ENCODE measurements at regions of chr3 and their contacts with region 1.

Region 1: DNA sequence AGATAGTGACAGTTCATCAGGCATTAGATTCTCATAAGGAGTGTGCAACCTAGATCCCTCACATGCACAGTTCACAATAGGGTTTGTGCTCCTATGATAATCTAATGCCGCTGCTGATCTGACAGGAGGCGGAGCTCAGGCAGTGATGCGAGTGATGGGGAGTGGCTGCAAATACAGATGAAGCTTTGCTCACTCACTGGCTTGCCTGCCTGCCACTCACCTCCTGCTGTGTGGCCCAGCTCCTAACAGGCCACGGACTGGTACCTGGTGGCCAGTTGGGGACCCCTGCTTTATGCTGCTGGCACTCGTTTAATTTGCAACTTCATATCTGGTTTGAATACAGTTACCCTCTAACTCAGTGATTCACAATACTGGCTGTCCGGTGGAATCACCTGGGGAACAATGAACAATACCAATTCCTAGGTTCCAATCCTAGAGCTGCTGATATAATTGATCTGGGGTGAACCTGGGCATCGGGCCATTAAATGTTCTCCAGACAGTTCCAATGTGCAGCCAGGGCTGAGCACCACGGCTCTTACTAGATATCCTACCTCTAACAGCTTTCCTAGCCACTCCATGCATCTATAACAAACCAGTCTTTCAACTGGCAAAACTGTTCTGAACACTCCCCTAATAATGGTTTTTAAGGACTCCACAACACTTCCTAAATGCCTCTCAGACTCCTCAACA is 131.4 kb downstream of the ATP1B3 start:
- DNase-seq: no peak
- ATAC-seq: no peak

Region 2: DNA sequence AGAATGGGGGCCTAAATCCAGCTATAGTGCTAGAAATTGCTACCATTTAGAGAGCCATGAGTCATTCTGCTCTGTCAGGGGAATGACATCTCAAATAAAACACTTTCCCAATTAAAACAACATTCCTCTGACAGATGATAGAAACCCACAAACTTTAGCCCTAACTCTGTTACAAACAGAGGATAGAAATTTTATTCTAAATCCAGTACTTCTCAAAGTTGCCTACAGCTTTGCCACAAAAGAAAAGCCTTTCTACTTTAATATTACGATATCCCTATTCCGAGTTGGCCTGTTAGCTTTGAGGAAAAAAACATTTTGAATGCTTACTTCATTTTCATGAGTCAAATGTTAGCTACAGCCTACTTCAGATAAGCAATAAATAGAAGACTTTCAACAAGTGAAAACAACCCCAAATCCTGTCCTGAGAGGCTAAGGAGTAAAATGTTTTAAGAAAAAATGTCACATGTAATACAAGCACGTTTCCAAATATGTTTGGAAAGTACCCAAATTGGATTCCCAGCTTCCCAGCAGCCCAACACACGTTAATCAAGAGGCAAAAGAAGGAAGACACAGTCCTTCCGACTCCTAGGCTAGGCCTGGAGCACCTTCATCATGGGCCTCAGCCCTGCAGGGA is 47.8 kb before region 1 on chr3:
- intact Hi-C with region 1: no loop called
- DNase-seq: no peak
- ATAC-seq: peak; percentile 59

Region 3: DNA sequence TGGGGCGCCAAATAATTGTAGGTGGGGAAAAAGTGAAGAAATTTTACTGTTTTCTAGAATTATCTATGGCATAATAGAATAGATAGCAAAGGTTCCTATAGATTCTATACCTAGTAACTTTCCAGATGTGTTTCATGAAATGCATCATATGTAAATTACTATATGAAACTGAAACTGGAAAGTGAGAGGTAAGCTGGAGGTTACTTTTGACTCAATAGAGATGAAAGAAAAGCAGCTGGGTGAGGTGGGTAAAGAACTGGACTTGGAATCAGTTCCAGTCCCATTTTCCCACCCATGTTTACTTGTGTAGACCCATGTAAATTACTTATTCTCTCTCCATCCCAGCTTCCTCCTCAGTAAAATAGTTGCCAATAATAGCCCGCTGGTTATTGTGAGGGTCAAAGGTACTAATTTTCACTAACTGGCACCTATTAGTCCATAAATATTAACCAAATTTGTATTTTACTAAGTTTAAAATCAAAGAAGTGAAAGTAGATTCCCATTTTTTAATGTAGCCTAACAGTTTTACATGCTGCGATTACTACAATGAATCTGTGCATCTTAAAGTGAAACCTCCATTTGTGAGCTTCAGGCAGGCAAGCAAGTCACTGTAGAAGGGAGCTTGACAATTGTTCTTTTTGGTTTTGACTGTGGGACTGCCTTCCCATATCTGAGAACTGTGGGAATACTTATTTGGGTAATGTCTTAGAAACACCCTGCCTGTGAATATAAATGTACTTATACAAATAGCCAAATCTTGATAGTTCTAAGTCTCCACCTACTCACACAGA is 1528.3 kb after region 1 on chr3:
- intact Hi-C with region 1: loop called (anchors 5 kb)
- DNase-seq: no peak
- ATAC-seq: peak; percentile 12

Measured in sciatic nerve (tissue), 2 donors.